ENCODE measurements at regions of chr20 and their contacts with region 1.

Region 1: DNA sequence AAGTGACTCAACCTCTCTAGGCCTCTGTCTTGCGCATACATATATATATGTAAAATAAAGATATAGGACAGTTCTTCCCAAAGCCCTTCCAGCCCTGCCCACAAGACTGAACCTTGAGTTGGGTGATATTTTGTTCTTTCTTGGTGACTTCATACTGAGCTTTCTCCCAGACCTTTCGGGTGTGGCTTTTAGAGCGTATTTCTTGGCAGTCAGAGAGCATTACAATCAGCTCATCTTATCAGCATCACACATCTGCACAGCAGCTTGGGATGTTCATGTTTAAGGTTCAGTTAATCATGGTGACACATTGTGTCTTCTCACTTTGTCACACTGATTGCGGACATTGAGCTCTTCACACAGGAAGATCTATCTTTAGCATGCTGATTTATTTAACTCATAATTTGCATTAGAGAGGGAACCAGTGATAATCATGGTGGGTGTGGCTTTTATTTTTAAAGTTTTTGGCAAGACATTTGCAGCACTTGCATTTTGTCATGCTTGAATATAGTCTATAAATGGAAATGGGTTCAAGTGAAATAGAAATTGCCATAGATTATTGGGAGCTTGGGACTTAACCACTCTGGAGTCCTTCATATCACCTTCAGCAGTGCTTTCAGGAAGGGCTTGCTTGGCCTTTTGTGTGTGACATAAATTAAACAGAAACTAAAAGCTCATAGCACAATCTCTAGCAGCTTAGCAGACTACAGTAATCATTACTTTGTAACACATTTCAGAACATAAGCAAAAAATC is 8.3 kb downstream of the KIF3B start:
- DNase-seq: peak; percentile 88
- H3K4me3 ChIP-seq: peak overlapping the region; percentile 58
- H3K27ac ChIP-seq: peak overlapping the region; percentile 98
- H3K4me1 ChIP-seq: peaks cover 91% of the 10 kb centered on the region
- CTCF ChIP-seq: no peak

Region 2: DNA sequence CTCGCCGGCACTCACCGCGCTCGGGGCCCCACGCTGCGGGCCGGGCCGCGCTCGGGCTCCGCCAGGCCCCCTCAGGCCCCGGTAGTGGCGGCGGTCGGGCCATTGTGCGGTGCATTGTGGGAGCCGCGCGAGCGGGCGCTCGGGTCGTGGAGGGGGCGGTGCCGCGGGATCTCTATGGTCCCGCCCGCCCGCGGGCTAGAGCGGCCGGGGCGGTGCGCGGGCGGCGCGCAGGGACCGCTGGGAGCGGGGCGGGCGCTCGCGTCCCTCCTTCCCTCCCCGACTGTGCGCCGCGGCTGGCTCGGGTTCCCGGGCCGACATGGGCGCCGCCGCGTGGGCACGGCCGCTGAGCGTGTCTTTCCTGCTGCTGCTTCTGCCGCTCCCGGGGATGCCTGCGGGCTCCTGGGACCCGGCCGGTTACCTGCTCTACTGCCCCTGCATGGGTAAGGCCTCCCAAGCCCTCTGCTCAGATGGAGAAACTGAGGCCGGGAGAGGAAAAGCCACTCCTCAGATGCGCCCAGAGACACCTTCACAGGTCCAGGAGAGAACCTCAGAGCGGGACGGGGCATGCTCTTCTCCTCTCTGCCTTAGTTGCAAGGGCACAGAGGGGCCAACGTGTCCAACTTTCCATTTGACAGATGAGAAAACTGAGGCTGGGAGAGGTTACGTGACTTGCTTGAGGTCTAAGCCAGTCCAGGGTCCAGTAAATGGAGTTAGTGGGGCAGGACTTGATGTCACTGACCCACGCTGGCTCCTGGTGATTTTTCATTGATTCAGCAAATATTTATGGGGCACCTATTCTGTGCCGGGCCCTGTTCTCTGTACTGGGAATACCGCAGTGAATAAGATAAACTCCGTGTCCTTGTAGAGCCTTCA is 77.9 kb before region 1 on chr20 and contains the starts of genes PLAGL2 and POFUT1:
- CTCF ChIA-PET with region 1: no interaction called
- POLR2A ChIA-PET with region 1: interaction called, 7 read pairs
- intact Hi-C with region 1: loop called (anchors 2 kb)
- DNase-seq: peak; percentile 92
- H3K4me3 ChIP-seq: peak within 1 kb of the TSS; percentile 93
- H3K27ac ChIP-seq: peak within 1 kb of the TSS; percentile 62
- H3K4me1 ChIP-seq: peaks cover 41% of the 10 kb centered on the region
- CTCF ChIP-seq: peak; percentile 55
- total RNA-seq, gene PLAGL2: 7.4 and 9.8 TPM in 2 replicates
- total RNA-seq, gene POFUT1: 16.8 and 21.4 TPM in 2 replicates

Region 3: GRCh38 chr20:32240220-32240619 is 45.6 kb before region 1 on chr20:
- CTCF ChIA-PET with region 1: no interaction called
- POLR2A ChIA-PET with region 1: interaction called, 10 read pairs
- intact Hi-C with region 1: no loop called
- DNase-seq: no peak
- H3K4me3 ChIP-seq: no peak overlapping the region
- H3K27ac ChIP-seq: no peak overlapping the region
- H3K4me1 ChIP-seq: peaks cover 19% of the 10 kb centered on the region
- CTCF ChIP-seq: peak; percentile 66

Region 4: DNA sequence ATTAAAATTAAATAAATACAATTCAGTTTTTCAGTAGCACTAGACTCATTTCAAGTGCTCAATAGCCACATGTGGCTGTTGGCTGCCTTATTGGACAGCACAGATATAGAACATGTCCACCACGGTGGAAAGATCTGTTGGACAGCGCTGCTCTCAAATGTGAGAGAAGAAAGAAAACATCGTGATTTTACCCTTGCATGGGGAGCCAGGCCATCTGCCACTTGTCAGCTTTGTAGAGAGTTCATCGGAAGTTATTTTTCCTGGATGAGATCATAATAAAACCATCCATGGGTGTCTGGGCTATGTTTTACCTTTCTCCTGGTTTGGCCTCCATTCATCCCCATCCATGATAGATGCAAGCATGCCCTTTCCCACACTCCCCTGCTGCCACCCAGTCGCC is 14.2 kb before region 1 on chr20:
- CTCF ChIA-PET with region 1: no interaction called
- POLR2A ChIA-PET with region 1: interaction called, 14 read pairs
- intact Hi-C with region 1: no loop called
- DNase-seq: no peak
- H3K4me3 ChIP-seq: no peak overlapping the region
- H3K27ac ChIP-seq: no peak overlapping the region
- H3K4me1 ChIP-seq: peaks cover 36% of the 10 kb centered on the region
- CTCF ChIP-seq: no peak

Region 5: DNA sequence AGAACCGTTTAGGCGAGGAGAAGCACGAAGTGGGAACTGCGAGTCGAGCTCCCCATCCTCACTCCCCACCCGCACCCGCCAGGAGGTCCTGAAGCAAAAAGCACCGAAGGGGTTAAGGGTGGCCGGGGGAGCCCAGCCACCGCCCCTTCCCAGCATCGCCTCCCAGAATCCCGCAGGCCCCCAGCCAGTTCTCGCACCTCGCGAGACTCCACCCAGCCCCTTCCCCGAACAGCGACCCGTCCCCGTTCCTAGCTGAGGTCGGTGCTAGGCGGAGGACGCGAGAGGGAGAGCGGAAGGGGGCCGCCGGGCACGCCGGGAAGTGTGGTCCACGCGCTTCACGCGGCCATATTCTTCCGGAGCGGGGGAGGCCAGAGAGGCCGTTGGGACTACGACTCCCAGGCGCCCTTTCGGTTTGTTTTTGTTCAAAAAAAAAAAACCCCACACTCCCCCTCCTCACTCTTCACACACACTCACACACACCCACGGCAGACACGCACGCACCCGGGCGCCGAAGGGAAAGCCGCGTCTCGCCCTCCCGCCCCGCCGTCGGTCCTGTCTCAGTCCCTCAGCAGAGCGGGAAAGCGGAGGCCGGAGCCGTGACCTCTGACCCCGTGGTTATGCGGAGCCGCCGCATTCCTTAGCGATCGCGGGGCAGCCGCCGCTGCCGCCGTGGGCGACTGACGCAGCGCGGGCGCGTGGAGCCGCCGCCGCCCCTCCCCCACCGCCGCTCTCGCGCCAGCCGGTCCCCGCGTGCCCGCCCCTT is 72.3 kb after region 1 on chr20 and contains the start of gene ASXL1:
- CTCF ChIA-PET with region 1: interaction called, 5 read pairs
- POLR2A ChIA-PET with region 1: interaction called, 5 read pairs
- intact Hi-C with region 1: loop called (anchors 2 kb)
- DNase-seq: peak; percentile 98
- H3K4me3 ChIP-seq: peak within 1 kb of the TSS; percentile 87
- H3K27ac ChIP-seq: peak within 1 kb of the TSS; percentile 75
- H3K4me1 ChIP-seq: peaks cover 63% of the 10 kb centered on the region
- CTCF ChIP-seq: no peak
- total RNA-seq, gene ASXL1: 81.5 and 84.7 TPM in 2 replicates

Region 6: GRCh38 chr20:32427996-32428395 is 142.2 kb after region 1 on chr20:
- CTCF ChIA-PET with region 1: no interaction called
- POLR2A ChIA-PET with region 1: no interaction called
- intact Hi-C with region 1: no loop called
- DNase-seq: no peak
- H3K4me3 ChIP-seq: no peak overlapping the region
- H3K27ac ChIP-seq: no peak overlapping the region
- H3K4me1 ChIP-seq: no peaks in the 10 kb centered on the region
- CTCF ChIP-seq: no peak